A549 (cell line): ENCODE measurements at regions of chr3 and their contacts with region 1.

Region 1: DNA sequence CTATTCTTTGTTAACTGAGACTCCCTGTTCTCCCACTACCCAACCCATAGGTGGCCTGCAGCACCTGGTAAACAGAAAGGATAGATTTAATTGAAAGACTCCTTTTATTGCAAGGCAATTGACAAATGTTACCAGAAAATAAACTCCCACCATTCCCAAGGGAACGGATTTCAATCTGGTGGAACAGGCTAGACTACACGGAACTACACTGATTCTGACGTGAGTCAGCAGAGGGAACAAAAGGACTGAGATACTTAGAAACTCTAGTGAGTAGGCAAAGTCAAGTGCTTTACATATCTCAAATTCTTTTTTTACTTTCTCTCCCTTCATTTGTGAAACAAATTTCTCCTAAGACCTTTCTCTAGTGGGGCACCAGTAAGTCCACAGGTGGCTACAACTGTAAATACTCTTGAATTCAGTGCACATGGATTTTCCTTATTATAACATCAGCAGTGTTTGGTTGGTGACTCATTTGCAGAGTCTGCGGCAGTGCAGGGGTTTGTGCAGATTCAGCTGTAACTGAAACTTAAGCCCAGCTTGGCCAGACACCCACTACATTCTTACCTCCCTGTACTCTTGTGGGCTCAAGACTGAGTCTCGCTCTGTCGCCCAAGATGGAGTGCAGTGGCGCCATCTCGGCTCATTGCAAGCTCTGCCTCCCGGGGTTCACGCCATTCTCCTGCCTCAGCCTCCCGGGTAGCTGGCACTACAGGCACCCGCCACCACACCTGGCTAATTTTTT is 34.3 kb upstream of the PLSCR2 start:
- DNase-seq: peak; percentile 23 to 88
- ATAC-seq: peak; percentile 89 to 91
- H3K4me3 ChIP-seq: no peak overlapping the region
- H3K27ac ChIP-seq: peak overlapping the region; percentile 61 to 91
- H3K4me1 ChIP-seq: peaks cover 52% of the 10 kb centered on the region
- CTCF ChIP-seq: no peak
- EP300 ChIP-seq: no peak
- POLR2A ChIP-seq: no peak
- RAD21 ChIP-seq: 0 out of 5 replicates have a peak, but pooled peaks of 1 of the 2 experiments have one; percentile 7

Region 2: GRCh38 chr3:146469150-146470017 is 34.2 kb before region 1 on chr3 and contains the start of gene PLSCR2:
- CTCF ChIA-PET with region 1: interaction called, 3 read pairs
- POLR2A ChIA-PET with region 1: interaction called, 13 read pairs
- DNase-seq: peak; percentile 71 to 78
- ATAC-seq: peak; percentile 94 to 96
- H3K4me3 ChIP-seq: peak within 1 kb of the TSS; percentile 65
- H3K27ac ChIP-seq: peak within 1 kb of the TSS; percentile 89 to 96
- H3K4me1 ChIP-seq: peaks cover 53% of the 10 kb centered on the region
- CTCF ChIP-seq: no peak
- EP300 ChIP-seq: no peak
- POLR2A ChIP-seq: peak; percentile 62
- RAD21 ChIP-seq: no peak; a peak in 1 of 5 replicates
- polyA plus RNA-seq, gene PLSCR2: 0.10 TPM in 1 of 2 replicates, not detected in the other

Region 3: DNA sequence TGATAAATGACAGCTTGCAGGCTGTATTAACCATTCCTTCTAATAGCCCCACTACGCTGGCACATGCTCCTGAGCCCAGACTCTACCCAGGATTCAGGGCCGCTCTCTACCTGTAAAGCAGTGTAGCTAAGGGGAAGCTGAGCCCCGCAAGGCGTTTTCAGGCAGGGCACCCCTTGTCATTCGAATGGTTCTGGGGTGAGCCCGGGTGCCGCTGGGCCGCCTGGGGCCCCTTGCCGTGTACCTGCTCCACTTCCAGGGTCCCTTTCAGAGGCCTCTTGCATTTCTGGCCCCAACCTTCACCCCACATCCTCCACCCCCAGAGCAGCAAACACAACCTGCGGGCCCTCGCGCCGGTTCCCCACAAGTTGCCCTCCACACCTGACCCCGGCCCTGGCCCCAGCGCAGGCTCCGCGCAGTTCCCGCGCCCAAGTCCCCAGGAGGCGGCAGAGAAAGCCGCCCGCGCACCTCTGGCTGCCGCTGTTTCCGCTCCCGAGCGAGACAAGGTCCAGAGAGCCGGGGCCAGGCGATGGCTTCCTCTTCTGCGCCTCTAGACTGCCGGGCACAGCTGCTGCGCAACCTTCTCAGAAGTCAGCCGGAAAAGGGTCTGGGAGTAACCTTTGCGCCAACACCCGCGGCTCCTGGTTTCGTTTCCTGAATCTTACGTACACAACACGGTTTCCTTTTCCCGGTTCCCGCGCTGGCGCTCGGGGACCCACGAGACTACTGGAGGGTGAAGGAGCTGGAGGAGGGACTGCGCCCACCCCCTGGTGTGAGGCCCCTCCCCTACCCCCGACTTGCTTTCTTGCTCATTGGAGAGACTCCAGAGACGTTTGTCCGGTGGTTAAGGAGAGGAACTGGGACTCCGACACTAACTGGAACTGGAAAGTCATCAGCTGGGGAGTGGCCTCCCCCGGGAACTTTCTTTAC is 40.6 kb after region 1 on chr3 and contains the start of gene PLSCR1:
- CTCF ChIA-PET with region 1: no interaction called
- POLR2A ChIA-PET with region 1: interaction called, 14 read pairs
- DNase-seq: peak; percentile 95 to 96
- ATAC-seq: peak; percentile 93 to 97
- H3K4me3 ChIP-seq: peak within 1 kb of the TSS; percentile 93
- H3K27ac ChIP-seq: peak within 1 kb of the TSS; percentile 88 to 93
- H3K4me1 ChIP-seq: peaks cover 24% of the 10 kb centered on the region; the same call in 2 of the 3 replicates
- CTCF ChIP-seq: no peak
- EP300 ChIP-seq: no peak
- POLR2A ChIP-seq: peak; percentile 51
- RAD21 ChIP-seq: peak in 1 of 2 experiments; percentile 31; a peak in 1 of 5 replicates
- polyA plus RNA-seq, gene PLSCR1: 41.5 and 54.4 TPM in 2 replicates